ENCODE measurements at regions of chr1 and their contacts with region 1.

Region 1: GRCh38 chr1:75785983-75786853 is at the start of gene RABGGTB:
- DNase-seq: peak; percentile 98
- H3K4me3 ChIP-seq: peak within 1 kb of the TSS; percentile 68 to 92 (median 78)
- H3K27ac ChIP-seq: peak within 1 kb of the TSS; percentile 82 to 89 (median 86)
- H3K4me1 ChIP-seq: peaks cover 35 to 55% (median 51%) of the 10 kb centered on the region in 4 donors
- H3K27me3 ChIP-seq: no peaks in the 10 kb centered on the region
- CTCF ChIP-seq: no peak
- EP300 ChIP-seq: no peak
- POLR2A ChIP-seq: peak; percentile 88
- total RNA-seq, gene RABGGTB: 24.3 to 55.2 (median 38.1) TPM

Region 2: GRCh38 chr1:75712306-75712705 is 73.9 kb before region 1 on chr1:
- intact Hi-C with region 1: no loop called
- DNase-seq: no peak
- H3K4me3 ChIP-seq: no peak overlapping the region
- H3K27ac ChIP-seq: peak overlapping the region in 3 of 4 donors; percentile 5 to 52 (median 35)
- H3K4me1 ChIP-seq: peaks cover 4 to 18% (median 16%) of the 10 kb centered on the region in 4 donors
- H3K27me3 ChIP-seq: no peaks in the 10 kb centered on the region
- CTCF ChIP-seq: no peak
- EP300 ChIP-seq: no peak
- POLR2A ChIP-seq: no peak

Region 3: DNA sequence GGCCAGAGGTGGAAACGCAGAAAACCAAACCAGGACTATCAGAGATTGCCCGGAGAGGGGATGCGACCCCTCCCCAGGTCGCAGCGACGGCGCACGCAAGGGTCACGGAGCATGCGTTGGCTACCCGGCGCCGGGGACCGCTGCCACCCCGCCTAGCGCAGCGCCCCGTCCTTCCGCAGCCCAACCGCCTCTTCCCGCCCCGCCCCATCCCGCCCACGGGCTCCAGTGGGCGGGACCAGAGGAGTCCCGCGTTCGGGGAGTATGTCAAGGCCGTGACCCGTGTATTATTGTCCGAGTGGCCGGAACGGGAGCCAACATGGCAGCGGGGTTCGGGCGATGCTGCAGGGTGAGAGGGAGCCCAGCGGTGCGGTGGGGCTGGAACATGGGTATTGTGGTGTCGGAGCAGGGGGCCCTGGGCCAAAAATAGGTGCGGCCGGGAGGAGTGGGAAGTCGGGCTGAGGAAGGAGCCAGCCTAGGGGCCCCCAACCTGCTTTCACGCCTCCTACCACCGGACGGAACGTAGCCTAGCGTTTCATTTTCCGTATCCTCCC is 61.7 kb before region 1 on chr1 and contains the start of gene ACADM:
- intact Hi-C with region 1: loop called (anchors 5 kb)
- DNase-seq: peak; percentile 97
- H3K4me3 ChIP-seq: peak within 1 kb of the TSS; percentile 75 to 77 (median 76)
- H3K27ac ChIP-seq: peak within 1 kb of the TSS; percentile 88 to 94 (median 92)
- H3K4me1 ChIP-seq: peaks cover 18 to 34% (median 31%) of the 10 kb centered on the region in 4 donors
- H3K27me3 ChIP-seq: no peaks in the 10 kb centered on the region
- CTCF ChIP-seq: no peak
- EP300 ChIP-seq: no peak
- POLR2A ChIP-seq: peak; percentile 45
- total RNA-seq, gene ACADM: 50.9 to 71.1 (median 59.7) TPM

Region 4: GRCh38 chr1:75969550-75969949 is 183.3 kb after region 1 on chr1:
- intact Hi-C with region 1: no loop called
- DNase-seq: no peak
- H3K4me3 ChIP-seq: no peak overlapping the region
- H3K27ac ChIP-seq: no peak overlapping the region
- H3K4me1 ChIP-seq: no peaks in the 10 kb centered on the region
- H3K27me3 ChIP-seq: no peaks in the 10 kb centered on the region
- CTCF ChIP-seq: no peak
- EP300 ChIP-seq: no peak
- POLR2A ChIP-seq: no peak

Measured in esophagus muscularis mucosa (tissue), 4 donors.